IMR-90 (cell line): ENCODE measurements at regions of chr13 and their contacts with region 1.

Region 1: DNA sequence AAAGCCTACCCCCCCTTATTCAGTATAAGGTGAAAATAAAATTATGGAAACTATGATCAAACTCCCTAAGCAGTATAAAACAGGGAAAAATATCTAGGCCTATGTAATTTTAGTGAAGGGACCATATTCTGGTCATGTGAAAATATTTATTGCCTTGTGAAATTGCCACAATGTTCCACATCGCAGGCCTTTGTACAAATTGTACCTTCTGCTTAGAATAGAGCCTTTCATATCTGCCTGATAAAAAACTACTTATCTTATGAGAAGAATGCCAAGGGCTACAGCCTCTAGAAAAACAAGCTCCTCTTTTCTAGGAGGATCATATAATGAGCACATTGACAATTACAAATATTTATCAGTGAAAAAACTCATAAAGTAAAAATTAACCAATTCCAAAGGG is 1280.0 kb downstream of the EFNB2 start:
- DNase-seq: no peak
- ATAC-seq: no peak
- H3K4me3 ChIP-seq: no peak overlapping the region
- H3K27ac ChIP-seq: no peak overlapping the region
- H3K4me1 ChIP-seq: no peaks in the 10 kb centered on the region
- H3K27me3 ChIP-seq: no peaks in the 10 kb centered on the region
- CTCF ChIP-seq: no peak
- POLR2A ChIP-seq: no peak
- RAD21 ChIP-seq: no peak

Region 2: GRCh38 chr13:103351035-103351828 is 1904.2 kb before region 1 on chr13:
- CTCF ChIA-PET with region 1: no interaction called
- POLR2A ChIA-PET with region 1: no interaction called
- dilution Hi-C with region 1: no loop called
- in situ Hi-C with region 1: no loop called
- intact Hi-C with region 1: loop called (anchors 10 kb)
- DNase-seq: no peak
- ATAC-seq: no peak
- H3K4me3 ChIP-seq: no peak overlapping the region
- H3K27ac ChIP-seq: no peak overlapping the region
- H3K4me1 ChIP-seq: no peaks in the 10 kb centered on the region
- H3K27me3 ChIP-seq: no peaks in the 10 kb centered on the region
- CTCF ChIP-seq: no peak
- POLR2A ChIP-seq: no peak
- RAD21 ChIP-seq: no peak

Region 3: DNA sequence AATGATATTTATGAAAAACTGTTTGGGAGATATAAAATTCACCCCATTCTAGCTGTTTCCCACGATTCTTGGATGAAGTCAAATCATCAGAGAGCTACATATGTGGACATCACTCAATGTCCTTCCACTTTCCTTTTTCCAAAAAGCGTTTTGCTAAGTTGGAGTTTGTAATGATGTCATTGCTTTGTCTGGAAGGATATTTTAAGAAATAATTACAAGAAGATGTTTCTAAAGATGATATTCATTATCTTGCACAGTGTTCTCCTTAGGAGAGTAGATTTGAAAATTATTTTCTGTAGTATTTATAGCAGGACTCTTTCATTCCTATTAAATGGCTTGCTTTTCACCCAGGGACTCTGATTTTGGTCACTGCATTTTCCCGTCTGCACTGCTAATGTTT is 428.7 kb after region 1 on chr13:
- CTCF ChIA-PET with region 1: no interaction called
- POLR2A ChIA-PET with region 1: no interaction called
- dilution Hi-C with region 1: no loop called
- in situ Hi-C with region 1: no loop called
- intact Hi-C with region 1: no loop called
- DNase-seq: no peak
- ATAC-seq: no peak
- H3K4me3 ChIP-seq: no peak overlapping the region
- H3K27ac ChIP-seq: no peak overlapping the region
- H3K4me1 ChIP-seq: no peaks in the 10 kb centered on the region
- H3K27me3 ChIP-seq: no peaks in the 10 kb centered on the region
- CTCF ChIP-seq: no peak
- POLR2A ChIP-seq: no peak
- RAD21 ChIP-seq: no peak